ENCODE measurements at regions of chr16 and their contacts with region 1.

Region 1: DNA sequence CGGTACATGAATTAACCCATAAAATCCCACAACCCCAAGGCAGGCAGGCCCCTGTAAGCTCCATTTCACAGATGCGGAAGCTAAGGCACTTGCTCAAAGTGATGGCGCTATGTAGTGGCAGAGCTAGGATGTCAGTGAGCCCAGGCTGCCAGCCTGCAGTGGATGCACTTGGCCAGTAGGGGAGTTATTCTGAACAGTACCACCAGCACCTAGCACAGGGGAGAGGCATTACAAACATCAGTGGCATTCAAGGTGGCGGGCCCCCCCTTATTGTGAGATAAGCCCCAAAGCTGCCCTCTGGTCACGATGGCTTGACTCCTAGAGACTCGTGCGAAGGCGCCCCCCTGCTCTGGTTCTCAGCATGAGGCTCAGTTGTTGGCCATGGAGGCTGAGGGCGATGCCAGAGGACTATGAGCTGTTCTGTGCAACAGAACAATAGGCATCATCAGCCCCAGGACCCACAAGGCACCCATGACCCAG is 33.8 kb downstream of the GTF3C1 start:
- DNase-seq: no peak
- H3K4me3 ChIP-seq: no peak overlapping the region
- CTCF ChIP-seq: peak; percentile 61

Region 2: DNA sequence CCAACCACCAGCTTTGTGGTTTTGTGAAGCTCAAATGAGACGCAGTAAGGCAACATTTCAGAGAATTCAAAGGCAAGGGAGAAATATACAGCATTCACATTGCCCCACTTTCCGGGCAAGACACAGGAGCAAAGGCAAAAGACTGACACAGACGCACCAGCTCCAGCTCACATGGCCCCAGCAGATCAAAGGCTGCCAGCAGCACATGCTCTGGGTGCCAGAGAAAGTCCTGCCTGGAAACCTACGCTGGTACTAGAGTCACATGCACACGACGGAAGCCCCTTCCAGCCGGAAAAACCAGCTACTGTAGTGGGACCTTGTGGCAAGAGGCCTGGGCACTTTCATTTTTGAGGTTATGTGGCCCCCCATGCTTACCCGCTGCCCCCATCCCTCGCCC is 16.3 kb before region 1 on chr16:
- CTCF ChIA-PET with region 1: interaction called, 20 read pairs
- POLR2A ChIA-PET with region 1: no interaction called
- DNase-seq: no peak
- H3K4me3 ChIP-seq: no peak overlapping the region
- CTCF ChIP-seq: no peak

Region 3: GRCh38 chr16:27505297-27506236 is 10.3 kb before region 1 on chr16:
- CTCF ChIA-PET with region 1: interaction called, 20 read pairs
- POLR2A ChIA-PET with region 1: no interaction called
- DNase-seq: no peak
- H3K4me3 ChIP-seq: no peak overlapping the region
- CTCF ChIP-seq: no peak

Region 4: DNA sequence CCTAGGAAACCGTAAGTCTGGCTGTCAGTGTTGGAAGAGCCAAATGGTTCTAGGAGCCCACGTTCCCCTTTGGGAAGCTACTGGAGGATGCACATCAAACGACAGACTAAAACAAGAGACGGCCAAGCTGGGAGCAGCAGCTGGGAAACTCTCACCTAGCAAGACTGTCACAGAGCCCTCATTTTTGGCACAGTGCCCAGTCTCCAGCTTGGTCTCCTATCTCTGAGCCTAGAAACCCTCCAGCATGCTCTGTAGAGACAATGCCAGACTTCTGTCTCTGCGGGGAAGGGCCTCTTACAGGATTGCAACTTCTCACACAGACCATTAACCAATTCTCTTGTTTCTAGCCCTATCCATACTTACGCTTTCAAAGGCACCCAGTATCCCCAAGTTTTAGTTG is 10.3 kb after region 1 on chr16:
- CTCF ChIA-PET with region 1: interaction called, 26 read pairs
- POLR2A ChIA-PET with region 1: interaction called, 4 read pairs
- DNase-seq: no peak
- H3K4me3 ChIP-seq: no peak overlapping the region
- CTCF ChIP-seq: no peak

Region 5: GRCh38 chr16:27657811-27658210 is 141.9 kb after region 1 on chr16:
- CTCF ChIA-PET with region 1: no interaction called
- POLR2A ChIA-PET with region 1: no interaction called
- DNase-seq: no peak
- H3K4me3 ChIP-seq: no peak overlapping the region
- CTCF ChIP-seq: no peak